ENCODE measurements at regions of chr5 and their contacts with region 1.

Region 1: DNA sequence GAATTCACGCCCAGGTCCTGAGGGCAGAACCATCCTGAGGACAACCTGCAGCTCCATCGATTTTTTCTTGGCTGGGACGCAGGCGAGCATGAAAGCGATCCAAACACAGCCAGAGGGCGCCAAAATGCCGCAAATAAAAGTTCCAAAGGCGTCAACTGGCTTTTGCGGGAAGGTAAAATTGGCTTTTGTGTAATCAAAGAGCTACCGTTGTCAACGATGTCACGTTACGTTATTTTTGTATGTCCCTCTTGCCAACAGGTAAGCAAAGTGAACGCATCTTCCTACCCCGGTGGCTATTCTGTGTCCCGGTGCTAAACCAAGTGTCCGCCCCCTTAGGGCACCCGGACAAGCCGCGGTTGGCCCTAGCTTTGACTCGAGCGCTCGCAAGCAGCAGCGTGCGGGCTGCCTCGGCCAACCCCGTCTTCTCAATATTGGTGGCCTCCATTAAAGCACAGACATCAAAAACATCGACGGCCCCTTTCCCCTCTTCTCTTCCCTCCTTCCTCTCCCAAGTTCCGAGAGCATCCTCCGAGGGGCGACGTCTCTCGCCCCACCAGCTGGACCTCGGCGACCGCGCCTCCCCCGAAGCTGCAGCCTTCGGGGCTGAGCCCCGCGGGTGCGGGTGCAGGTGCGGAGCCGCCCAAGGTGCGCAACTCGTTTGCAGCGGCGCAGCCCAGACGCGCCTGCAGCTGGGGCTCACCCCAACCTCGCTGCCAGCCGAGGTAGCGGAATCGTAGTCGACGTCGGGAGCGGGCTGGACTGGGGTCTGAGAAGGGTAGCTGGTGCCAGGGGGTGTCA is 1.1 kb upstream of the BASP1 start:
- DNase-seq: peak; percentile 85
- H3K4me3 ChIP-seq: peak overlapping the region; percentile 23
- H3K27ac ChIP-seq: no peak overlapping the region
- H3K4me1 ChIP-seq: no peaks in the 10 kb centered on the region
- H3K27me3 ChIP-seq: no peaks in the 10 kb centered on the region
- CTCF ChIP-seq: peak; percentile 63

Region 2: DNA sequence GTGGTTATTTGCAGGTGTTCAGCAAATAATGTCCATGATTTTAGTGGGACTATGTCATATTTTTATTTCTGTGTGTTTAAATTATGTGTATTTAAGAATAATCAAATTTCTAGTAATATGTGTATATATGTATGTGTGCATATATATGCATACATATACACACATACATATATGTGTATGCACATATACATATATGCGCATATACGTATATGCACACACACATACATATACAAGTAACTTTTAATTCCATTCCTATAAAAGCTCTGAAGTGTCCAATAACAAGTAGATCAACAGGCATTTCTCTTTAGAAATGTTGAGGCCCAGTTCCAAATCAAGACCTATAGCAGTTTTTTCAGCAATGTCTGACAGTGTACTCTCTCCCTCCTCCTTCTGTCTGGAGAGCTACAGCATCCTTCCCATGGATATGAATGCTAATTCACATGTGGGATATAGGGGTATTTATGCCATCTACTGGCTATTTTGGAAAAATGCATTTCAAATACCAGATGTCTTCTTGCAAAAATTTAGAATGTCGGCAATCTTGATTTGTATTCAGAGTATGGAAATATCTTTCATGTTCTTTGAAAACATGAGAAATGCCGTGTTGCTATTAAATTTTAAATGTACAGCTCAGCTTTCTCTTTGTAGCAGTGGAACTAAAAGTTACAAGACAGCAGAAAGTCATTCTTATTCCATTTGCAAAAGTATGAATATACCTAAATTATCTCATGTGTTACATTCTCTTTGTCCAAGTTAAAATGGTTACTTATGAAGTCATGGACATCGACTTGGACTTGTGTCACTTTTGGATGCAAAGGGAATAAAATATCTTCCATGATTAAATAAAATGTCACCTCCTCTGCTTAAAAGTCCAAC is 1065.5 kb after region 1 on chr5:
- intact Hi-C with region 1: loop called (anchors 5 kb)
- DNase-seq: no peak
- H3K4me3 ChIP-seq: no peak overlapping the region
- H3K27ac ChIP-seq: no peak overlapping the region
- H3K4me1 ChIP-seq: no peaks in the 10 kb centered on the region
- H3K27me3 ChIP-seq: no peaks in the 10 kb centered on the region
- CTCF ChIP-seq: no peak

Region 3: GRCh38 chr5:18305297-18305924 is 1089.0 kb after region 1 on chr5:
- intact Hi-C with region 1: loop called (anchors 5 kb)
- DNase-seq: no peak
- H3K4me3 ChIP-seq: no peak overlapping the region
- H3K27ac ChIP-seq: no peak overlapping the region
- H3K4me1 ChIP-seq: no peaks in the 10 kb centered on the region
- H3K27me3 ChIP-seq: no peaks in the 10 kb centered on the region
- CTCF ChIP-seq: peak; percentile 63

Measured in colonic mucosa (tissue), 4 donors.